ENCODE measurements at regions of chr1 and their contacts with region 1.

Region 1: DNA sequence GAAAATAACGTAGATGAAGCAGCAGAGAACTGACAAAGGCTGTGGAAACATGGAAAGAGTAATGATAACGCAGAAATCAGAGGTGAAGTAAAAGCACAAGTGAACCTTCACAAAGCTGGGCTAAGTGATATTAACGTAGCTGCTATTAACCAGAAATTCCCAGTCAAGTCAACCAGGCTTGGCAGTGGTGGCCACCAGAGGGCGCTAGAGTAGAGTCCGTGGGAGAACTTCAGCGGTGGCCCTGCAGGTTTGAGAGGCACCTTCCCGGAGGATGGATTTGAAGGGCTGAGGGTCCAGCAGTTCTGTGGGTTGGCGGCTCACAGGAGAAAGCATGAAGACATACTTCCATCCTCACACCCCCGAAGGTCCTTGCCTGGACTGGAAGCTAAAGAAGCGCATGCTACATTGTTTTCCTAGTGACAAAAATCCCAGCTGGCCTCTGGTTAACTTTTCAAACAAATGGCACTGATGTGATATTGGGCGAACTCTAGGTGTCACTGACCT is 81.7 kb upstream of the ZNF648 start:
- DNase-seq: peak; percentile 73 to 94 (median 88)
- ATAC-seq: peak; percentile 75
- H3K4me3 ChIP-seq: no peak overlapping the region
- H3K4me3 Mint-ChIP-seq: no peak overlapping the region
- H3K27ac ChIP-seq: no peak overlapping the region
- H3K27ac Mint-ChIP-seq: no peak overlapping the region
- H3K4me1 ChIP-seq: peaks cover 3% of the 10 kb centered on the region
- H3K4me1 Mint-ChIP-seq: peaks cover 6% of the 10 kb centered on the region
- H3K27me3 ChIP-seq: no peaks in the 10 kb centered on the region
- H3K27me3 Mint-ChIP-seq: peaks cover 12% of the 10 kb centered on the region
- CTCF ChIP-seq: peak; percentile 84

Region 2: GRCh38 chr1:181479137-181479745 is 664.0 kb before region 1 on chr1:
- CTCF ChIA-PET with region 1: no interaction called
- POLR2A ChIA-PET with region 1: no interaction called
- intact Hi-C with region 1: loop called in 1 of 2 experiments (anchors 1 kb)
- DNase-seq: peak in 5 of 14 experiments; percentile 7 to 63 (median 48)
- ATAC-seq: peak; percentile 52
- H3K4me3 ChIP-seq: no peak overlapping the region
- H3K4me3 Mint-ChIP-seq: no peak overlapping the region
- H3K27ac ChIP-seq: no peak overlapping the region
- H3K27ac Mint-ChIP-seq: no peak overlapping the region
- H3K4me1 ChIP-seq: peaks cover 2% of the 10 kb centered on the region
- H3K4me1 Mint-ChIP-seq: no peaks in the 10 kb centered on the region
- H3K27me3 ChIP-seq: peaks cover 27 to 42% of the 10 kb centered on the region in 2 experiments
- H3K27me3 Mint-ChIP-seq: peaks cover 57% of the 10 kb centered on the region
- CTCF ChIP-seq: peak; percentile 60

Region 3: GRCh38 chr1:182133176-182133575 is 10.0 kb before region 1 on chr1:
- CTCF ChIA-PET with region 1: interaction called, 10 read pairs
- POLR2A ChIA-PET with region 1: no interaction called
- intact Hi-C with region 1: no loop called
- DNase-seq: no peak
- ATAC-seq: no peak
- H3K4me3 ChIP-seq: no peak overlapping the region
- H3K4me3 Mint-ChIP-seq: no peak overlapping the region
- H3K27ac ChIP-seq: no peak overlapping the region
- H3K27ac Mint-ChIP-seq: no peak overlapping the region
- H3K4me1 ChIP-seq: no peaks in the 10 kb centered on the region
- H3K4me1 Mint-ChIP-seq: no peaks in the 10 kb centered on the region
- H3K27me3 ChIP-seq: no peaks in the 10 kb centered on the region
- H3K27me3 Mint-ChIP-seq: no peaks in the 10 kb centered on the region
- CTCF ChIP-seq: no peak

Region 4: GRCh38 chr1:182391362-182392044 is 248.3 kb after region 1 on chr1 and contains the start of gene GLUL:
- CTCF ChIA-PET with region 1: interaction called, 67 read pairs
- POLR2A ChIA-PET with region 1: interaction called, 22 read pairs
- intact Hi-C with region 1: loop called (anchors 1 kb)
- DNase-seq: peak; percentile 33 to 85 (median 60)
- ATAC-seq: peak; percentile 65
- H3K4me3 ChIP-seq: peak within 1 kb of the TSS; percentile 79
- H3K4me3 Mint-ChIP-seq: peak within 1 kb of the TSS; percentile 94
- H3K27ac ChIP-seq: peak within 1 kb of the TSS in 1 of 2 donors; percentile 17
- H3K27ac Mint-ChIP-seq: peak within 1 kb of the TSS; percentile 83
- H3K4me1 ChIP-seq: peaks cover 27% of the 10 kb centered on the region
- H3K4me1 Mint-ChIP-seq: peaks cover 34% of the 10 kb centered on the region
- H3K27me3 ChIP-seq: no peaks in the 10 kb centered on the region
- H3K27me3 Mint-ChIP-seq: peaks cover 8% of the 10 kb centered on the region
- CTCF ChIP-seq: no peak
- total RNA-seq, gene GLUL: 60.4 to 64.0 TPM

Region 5: GRCh38 chr1:182397771-182398393 is 254.7 kb after region 1 on chr1:
- CTCF ChIA-PET with region 1: interaction called, 67 read pairs
- POLR2A ChIA-PET with region 1: interaction called, 22 read pairs
- intact Hi-C with region 1: loop called (anchors 1 kb)
- DNase-seq: no peak
- ATAC-seq: no peak
- H3K4me3 ChIP-seq: no peak overlapping the region
- H3K4me3 Mint-ChIP-seq: no peak overlapping the region
- H3K27ac ChIP-seq: no peak overlapping the region
- H3K27ac Mint-ChIP-seq: no peak overlapping the region
- H3K4me1 ChIP-seq: peaks cover 3% of the 10 kb centered on the region
- H3K4me1 Mint-ChIP-seq: peaks cover 10% of the 10 kb centered on the region
- H3K27me3 ChIP-seq: no peaks in the 10 kb centered on the region
- H3K27me3 Mint-ChIP-seq: peaks cover 14% of the 10 kb centered on the region
- CTCF ChIP-seq: no peak

Measured in CD4-positive, alpha-beta T cell (primary cell).